ENCODE measurements at regions of chr6 and their contacts with region 1.

Region 1: GRCh38 chr6:151440930-151441329 is 11.0 kb downstream of the RMND1 start:
- DNase-seq: no peak
- ATAC-seq: no peak
- H3K4me3 Mint-ChIP-seq: peak overlapping the region; percentile 3
- H3K27ac Mint-ChIP-seq: no peak overlapping the region
- H3K4me1 Mint-ChIP-seq: peaks cover 15% of the 10 kb centered on the region
- H3K27me3 Mint-ChIP-seq: no peaks in the 10 kb centered on the region

Region 2: GRCh38 chr6:151403919-151404308 is 37.0 kb before region 1 on chr6:
- CTCF ChIA-PET with region 1: interaction called, 12 read pairs
- POLR2A ChIA-PET with region 1: no interaction called
- DNase-seq: no peak
- ATAC-seq: no peak
- H3K4me3 Mint-ChIP-seq: no peak overlapping the region
- H3K27ac Mint-ChIP-seq: no peak overlapping the region
- H3K4me1 Mint-ChIP-seq: peaks cover 38% of the 10 kb centered on the region
- H3K27me3 Mint-ChIP-seq: no peaks in the 10 kb centered on the region

Region 3: DNA sequence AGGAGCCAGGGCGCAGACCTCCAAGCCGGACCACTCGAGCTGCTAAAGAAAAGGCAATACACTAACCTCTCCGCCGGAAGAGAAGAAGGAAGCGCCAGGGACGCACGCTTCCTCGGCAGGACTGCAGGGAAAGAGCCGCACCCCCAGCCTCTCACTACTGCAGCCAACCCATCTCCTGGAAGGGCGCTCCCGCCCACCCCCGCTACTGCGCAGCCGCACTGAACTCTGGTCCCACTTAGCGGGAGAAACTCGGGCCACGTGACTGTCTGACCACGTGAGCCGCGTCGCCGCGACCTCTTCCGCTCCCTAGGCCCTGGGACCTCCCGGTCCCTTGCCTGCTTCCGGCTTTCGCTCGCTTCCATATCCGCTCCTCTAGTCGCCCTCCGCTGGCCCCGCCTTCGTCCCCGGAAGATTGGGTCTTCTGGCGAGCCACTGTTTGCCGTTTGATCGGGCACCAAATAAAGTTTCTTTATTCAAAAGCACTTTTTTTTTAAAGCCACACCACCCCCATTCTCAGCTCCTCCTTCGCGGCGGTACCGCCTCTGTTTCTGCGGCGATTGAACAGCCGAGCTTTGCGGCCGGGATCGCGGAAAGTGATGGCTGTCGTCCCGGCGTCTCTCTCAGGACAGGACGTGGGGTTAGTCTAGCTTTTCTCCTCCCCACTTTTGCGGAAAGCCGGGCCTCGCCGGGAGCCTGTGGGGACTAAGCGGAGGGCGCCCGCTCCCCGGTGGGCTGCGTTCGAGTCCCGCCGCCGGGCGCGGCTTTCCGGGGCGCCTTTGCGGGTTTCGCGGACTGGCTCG is 11.2 kb after region 1 on chr6 and contains the start of gene RMND1:
- CTCF ChIA-PET with region 1: interaction called, 12 read pairs
- POLR2A ChIA-PET with region 1: interaction called, 6 read pairs
- DNase-seq: peak; percentile 100
- ATAC-seq: peak; percentile 98
- H3K4me3 Mint-ChIP-seq: peak within 1 kb of the TSS; percentile 99
- H3K27ac Mint-ChIP-seq: peak within 1 kb of the TSS; percentile 94
- H3K4me1 Mint-ChIP-seq: peaks cover 26% of the 10 kb centered on the region
- H3K27me3 Mint-ChIP-seq: no peaks in the 10 kb centered on the region
- total RNA-seq, gene RMND1: 18.6 to 19.2 TPM

Region 4: GRCh38 chr6:151475653-151476523 is 35.0 kb after region 1 on chr6:
- CTCF ChIA-PET with region 1: interaction called, 23 read pairs
- POLR2A ChIA-PET with region 1: no interaction called
- DNase-seq: peak; percentile 69
- ATAC-seq: peak; percentile 47
- H3K4me3 Mint-ChIP-seq: no peak overlapping the region
- H3K27ac Mint-ChIP-seq: no peak overlapping the region
- H3K4me1 Mint-ChIP-seq: peaks cover 8% of the 10 kb centered on the region
- H3K27me3 Mint-ChIP-seq: no peaks in the 10 kb centered on the region